ENCODE measurements at regions of chr4 and their contacts with region 1.

Region 1: DNA sequence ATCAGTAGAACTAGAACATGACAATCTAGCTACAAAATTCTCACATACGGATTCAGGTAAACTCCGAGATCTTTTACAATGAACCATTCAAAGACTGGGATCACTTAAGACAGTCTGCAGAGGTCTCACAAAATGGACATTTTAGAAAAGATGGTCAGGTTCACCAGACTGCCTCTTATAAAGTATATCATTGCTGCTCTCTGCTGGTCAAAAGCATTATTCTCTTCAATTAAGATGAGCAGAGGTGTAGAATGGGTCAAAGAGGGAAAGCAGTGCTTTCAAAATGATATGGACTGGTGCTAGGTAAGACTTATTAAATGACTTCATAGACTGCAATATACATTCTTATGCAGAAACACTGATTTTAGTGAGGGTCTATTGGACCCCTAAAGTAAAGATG is 434.7 kb downstream of the PACRGL start:
- DNase-seq: no peak
- ATAC-seq: no peak
- H3K4me3 ChIP-seq: no peak overlapping the region
- H3K27ac ChIP-seq: no peak overlapping the region
- H3K4me1 ChIP-seq: no peaks in the 10 kb centered on the region
- H3K27me3 ChIP-seq: no peaks in the 10 kb centered on the region
- CTCF ChIP-seq: no peak
- POLR2A ChIP-seq: no peak

Region 2: GRCh38 chr4:20773144-20773997 is 361.6 kb before region 1 on chr4:
- in situ Hi-C with region 1: loop called in 1 of 4 experiments (anchors 25 kb)
- intact Hi-C with region 1: loop called (anchors 10 kb)
- DNase-seq: no peak
- ATAC-seq: no peak
- H3K4me3 ChIP-seq: no peak overlapping the region
- H3K27ac ChIP-seq: no peak overlapping the region
- H3K4me1 ChIP-seq: no peaks in the 10 kb centered on the region
- H3K27me3 ChIP-seq: no peaks in the 10 kb centered on the region
- CTCF ChIP-seq: peak in 2 of 5 experiments; percentile 28 to 47
- POLR2A ChIP-seq: no peak